Activated CD4-positive, alpha-beta T cell treated with anti-CD3 and anti-CD28 coated beads for 36 hours (primary cell): ENCODE measurements at regions of chr1 and their contacts with region 1.

Region 1: GRCh38 chr1:182604169-182605164 is at the start of gene RGS16:
- DNase-seq: peak; percentile 97
- ATAC-seq: peak; percentile 88
- H3K4me3 Mint-ChIP-seq: no peak within 1 kb of the TSS
- H3K27ac Mint-ChIP-seq: peak within 1 kb of the TSS; percentile 70
- H3K4me1 Mint-ChIP-seq: peaks cover 43% of the 10 kb centered on the region
- H3K27me3 Mint-ChIP-seq: peaks cover 6% of the 10 kb centered on the region
- total RNA-seq, gene RGS16: 27.2 to 30.6 TPM

Region 2: GRCh38 chr1:182446033-182446669 is 158.3 kb before region 1 on chr1:
- CTCF ChIA-PET with region 1: no interaction called
- POLR2A ChIA-PET with region 1: no interaction called
- intact Hi-C with region 1: loop called (anchors 2 to 5 kb)
- DNase-seq: peak; percentile 45
- ATAC-seq: peak; percentile 66
- H3K4me3 Mint-ChIP-seq: no peak overlapping the region
- H3K27ac Mint-ChIP-seq: no peak overlapping the region
- H3K4me1 Mint-ChIP-seq: peaks cover 2% of the 10 kb centered on the region
- H3K27me3 Mint-ChIP-seq: no peaks in the 10 kb centered on the region

Region 3: DNA sequence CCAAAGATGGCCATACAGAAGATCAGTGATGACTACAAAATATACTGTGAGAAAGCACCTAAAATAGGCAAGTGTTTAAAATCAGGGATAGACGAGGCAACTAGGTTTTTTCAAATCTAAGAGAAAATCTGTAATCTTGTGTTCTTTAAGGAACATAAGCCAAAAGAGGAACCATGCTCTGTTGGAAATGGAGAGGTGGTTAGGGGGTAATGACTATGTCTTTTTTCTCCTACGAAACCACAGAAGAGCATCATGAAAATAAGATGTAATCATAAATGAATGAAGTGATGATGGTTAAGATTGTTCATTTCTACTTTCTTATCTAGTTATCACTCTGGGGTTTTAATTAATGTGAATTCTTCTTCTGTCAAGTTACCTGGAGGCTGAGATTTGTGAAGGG is 111.4 kb before region 1 on chr1:
- CTCF ChIA-PET with region 1: no interaction called
- POLR2A ChIA-PET with region 1: no interaction called
- intact Hi-C with region 1: no loop called
- DNase-seq: no peak
- ATAC-seq: no peak
- H3K4me3 Mint-ChIP-seq: no peak overlapping the region
- H3K27ac Mint-ChIP-seq: no peak overlapping the region
- H3K4me1 Mint-ChIP-seq: no peaks in the 10 kb centered on the region
- H3K27me3 Mint-ChIP-seq: peaks cover 2% of the 10 kb centered on the region

Region 4: GRCh38 chr1:182614796-182615454 is 10.5 kb after region 1 on chr1:
- CTCF ChIA-PET with region 1: interaction called, 31 read pairs
- POLR2A ChIA-PET with region 1: interaction called, 23 read pairs
- intact Hi-C with region 1: loop called (anchors 1 kb)
- DNase-seq: peak; percentile 74
- ATAC-seq: peak; percentile 20
- H3K4me3 Mint-ChIP-seq: peak overlapping the region; percentile 69
- H3K27ac Mint-ChIP-seq: peak overlapping the region; percentile 89
- H3K4me1 Mint-ChIP-seq: peaks cover 52% of the 10 kb centered on the region
- H3K27me3 Mint-ChIP-seq: peaks cover 35% of the 10 kb centered on the region

Region 5: GRCh38 chr1:182716740-182717720 is 112.6 kb after region 1 on chr1:
- CTCF ChIA-PET with region 1: interaction called, 3 read pairs
- POLR2A ChIA-PET with region 1: no interaction called
- intact Hi-C with region 1: loop called (anchors 2 to 5 kb)
- DNase-seq: no peak
- ATAC-seq: peak; percentile 31
- H3K4me3 Mint-ChIP-seq: no peak overlapping the region
- H3K27ac Mint-ChIP-seq: peak overlapping the region; percentile 17
- H3K4me1 Mint-ChIP-seq: peaks cover 50% of the 10 kb centered on the region
- H3K27me3 Mint-ChIP-seq: peaks cover 2% of the 10 kb centered on the region

Region 6: DNA sequence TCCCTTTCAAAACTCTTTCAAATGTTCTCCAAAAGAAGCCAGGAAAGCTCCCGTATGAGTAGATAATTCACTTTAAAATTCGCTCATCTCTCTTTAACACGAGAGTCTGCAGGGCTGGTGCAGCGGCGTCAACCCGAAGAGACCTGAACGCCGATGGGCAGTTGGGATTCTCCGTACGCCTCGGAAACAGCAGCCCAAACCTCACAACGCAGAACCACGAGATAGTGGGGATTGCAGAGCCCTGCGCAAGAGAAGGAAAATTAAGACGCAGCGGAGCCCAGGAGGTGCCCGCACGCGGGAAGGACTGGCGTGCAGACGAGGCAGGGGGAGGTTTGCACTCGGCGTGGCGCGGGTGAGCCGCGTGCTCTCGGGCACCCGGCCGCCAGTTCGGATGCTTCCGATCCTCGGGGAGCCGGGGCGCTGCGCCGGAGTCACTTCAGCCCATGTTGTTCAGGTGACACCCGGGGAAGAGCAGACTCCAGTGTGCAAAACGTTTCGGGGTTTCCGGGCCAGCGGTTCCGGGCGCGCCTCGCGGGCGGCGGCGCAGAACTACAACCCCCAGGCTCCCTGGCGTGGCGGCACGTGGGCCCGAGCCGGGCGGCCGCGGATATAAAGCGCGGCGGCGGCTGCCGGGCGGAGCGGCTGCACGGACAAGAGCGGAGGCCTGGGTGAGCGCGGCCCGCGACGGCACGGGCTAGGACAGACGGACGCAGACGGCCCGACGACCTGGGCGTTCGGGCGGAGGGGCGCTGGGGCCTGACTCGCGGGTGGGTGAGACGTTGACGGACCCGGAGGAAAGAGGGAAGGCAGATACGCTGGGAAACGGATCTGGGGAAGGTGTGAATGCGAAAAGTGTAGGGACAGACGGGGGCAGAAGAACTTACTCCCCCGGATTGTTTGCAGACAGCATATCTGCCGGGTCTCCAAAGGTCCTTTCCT is 184.9 kb after region 1 on chr1 and contains the start of gene NPL:
- CTCF ChIA-PET with region 1: interaction called, 772 read pairs
- POLR2A ChIA-PET with region 1: no interaction called
- intact Hi-C with region 1: loop called in 1 of 2 experiments (anchors 1 kb)
- DNase-seq: peak; percentile 90
- ATAC-seq: peak; percentile 95
- H3K4me3 Mint-ChIP-seq: peak within 1 kb of the TSS; percentile 79
- H3K27ac Mint-ChIP-seq: peak within 1 kb of the TSS; percentile 68
- H3K4me1 Mint-ChIP-seq: peaks cover 11% of the 10 kb centered on the region
- H3K27me3 Mint-ChIP-seq: peaks cover 4% of the 10 kb centered on the region
- total RNA-seq, gene NPL: 4.0 to 5.6 TPM